Endothelial cell of umbilical vein (primary cell): ENCODE measurements at regions of chr11 and their contacts with region 1.

Region 1: GRCh38 chr11:2305140-2305840 is 3.5 kb downstream of the TSPAN32 start:
- DNase-seq: peak; percentile 56
- H3K4me3 ChIP-seq: no peak overlapping the region
- H3K27ac ChIP-seq: no peak overlapping the region
- H3K4me1 ChIP-seq: peaks cover 7% of the 10 kb centered on the region
- H3K27me3 ChIP-seq: no peaks in the 10 kb centered on the region
- CTCF ChIP-seq: peak; percentile 85 to 98
- POLR2A ChIP-seq: no peak

Region 2: DNA sequence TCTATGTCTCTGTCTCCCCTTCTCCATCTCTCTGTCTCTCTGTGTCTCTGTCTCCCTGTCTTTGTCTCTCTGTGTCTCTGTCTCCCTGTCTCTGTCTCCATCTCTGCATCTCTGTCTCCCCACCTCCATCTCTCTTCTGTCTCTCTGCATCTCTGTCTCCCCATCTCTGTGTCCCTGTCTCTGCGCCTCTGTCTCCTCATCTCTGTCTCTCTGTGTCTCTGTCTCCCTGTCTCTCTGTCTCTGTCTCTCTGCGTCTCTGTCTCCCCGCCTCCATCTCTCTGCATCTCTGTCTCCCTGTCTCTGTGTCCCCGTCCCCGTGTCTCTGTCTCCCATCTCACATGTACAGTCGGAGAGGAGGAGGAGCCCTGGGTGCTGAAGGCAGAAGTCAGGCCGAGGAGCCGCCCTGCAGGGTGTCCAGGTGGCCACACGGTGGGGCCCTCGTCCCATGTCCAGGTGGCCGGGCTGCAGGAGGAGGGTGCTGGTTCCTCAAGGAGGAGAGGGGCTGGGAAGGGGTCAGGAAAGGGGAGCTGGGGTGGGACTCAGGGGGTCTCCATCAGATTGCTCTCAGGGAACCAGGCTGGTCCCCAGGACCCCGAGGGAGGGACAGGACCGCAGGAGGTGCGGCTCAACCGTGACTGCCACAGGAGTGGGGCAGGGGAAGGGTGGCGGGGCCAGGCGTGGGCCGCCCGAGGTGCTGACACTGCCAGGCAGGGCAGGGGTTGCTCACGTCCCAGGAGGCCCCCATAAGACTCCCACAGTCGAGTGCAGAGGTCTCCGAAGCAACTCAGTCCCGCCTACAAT is 108.1 kb before region 1 on chr11:
- CTCF ChIA-PET with region 1: interaction called, 21 read pairs
- POLR2A ChIA-PET with region 1: no interaction called
- dilution Hi-C with region 1: no loop called
- intact Hi-C with region 1: loop called (anchors 2 kb)
- DNase-seq: peak; percentile 38
- H3K4me3 ChIP-seq: no peak overlapping the region
- H3K27ac ChIP-seq: no peak overlapping the region
- H3K4me1 ChIP-seq: no peaks in the 10 kb centered on the region
- H3K27me3 ChIP-seq: no peaks in the 10 kb centered on the region
- CTCF ChIP-seq: peak; percentile 63 to 81
- POLR2A ChIP-seq: no peak

Region 3: DNA sequence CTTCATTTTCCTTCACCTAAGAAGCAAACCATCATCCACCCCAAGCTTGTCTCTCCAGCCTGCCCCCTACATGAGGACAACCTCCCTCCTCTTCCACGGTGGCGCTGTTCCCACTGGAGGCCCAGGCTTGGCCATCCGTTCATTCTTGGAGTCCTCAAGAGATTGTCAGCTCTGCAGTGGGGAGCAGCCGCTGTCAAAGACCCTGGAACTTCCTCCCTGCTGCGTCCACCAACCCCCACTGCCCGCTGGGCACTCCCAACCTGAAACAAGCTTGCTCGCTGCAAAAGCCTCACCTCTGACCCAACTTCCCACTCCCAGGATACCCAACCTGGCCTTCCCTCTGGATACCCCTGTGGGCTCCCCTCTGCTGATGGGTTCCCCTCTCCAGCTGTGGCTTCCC is 61.4 kb after region 1 on chr11:
- CTCF ChIA-PET with region 1: interaction called, 11 read pairs
- POLR2A ChIA-PET with region 1: no interaction called
- dilution Hi-C with region 1: no loop called
- intact Hi-C with region 1: no loop called
- DNase-seq: no peak
- H3K4me3 ChIP-seq: no peak overlapping the region
- H3K27ac ChIP-seq: no peak overlapping the region
- H3K4me1 ChIP-seq: no peaks in the 10 kb centered on the region
- H3K27me3 ChIP-seq: no peaks in the 10 kb centered on the region
- CTCF ChIP-seq: no peak
- POLR2A ChIP-seq: no peak

Region 4: GRCh38 chr11:2377511-2378443 is 72.5 kb after region 1 on chr11:
- CTCF ChIA-PET with region 1: interaction called, 16 read pairs
- POLR2A ChIA-PET with region 1: interaction called, 9 read pairs
- dilution Hi-C with region 1: no loop called
- intact Hi-C with region 1: no loop called
- DNase-seq: peak; percentile 58
- H3K4me3 ChIP-seq: peak overlapping the region; percentile 72 to 80 (median 75)
- H3K27ac ChIP-seq: peak overlapping the region; percentile 91
- H3K4me1 ChIP-seq: peaks cover 37% of the 10 kb centered on the region
- H3K27me3 ChIP-seq: no peaks in the 10 kb centered on the region
- CTCF ChIP-seq: no peak
- POLR2A ChIP-seq: no peak

Region 5: GRCh38 chr11:2400069-2400760 is 94.9 kb after region 1 on chr11 and contains the start of gene TSSC4:
- CTCF ChIA-PET with region 1: interaction called, 42 read pairs
- POLR2A ChIA-PET with region 1: no interaction called
- dilution Hi-C with region 1: no loop called
- intact Hi-C with region 1: loop called (anchors 1 kb)
- DNase-seq: peak; percentile 100
- H3K4me3 ChIP-seq: peak within 1 kb of the TSS; percentile 56 to 86 (median 81)
- H3K27ac ChIP-seq: peak within 1 kb of the TSS; percentile 99
- H3K4me1 ChIP-seq: peaks cover 18% of the 10 kb centered on the region
- H3K27me3 ChIP-seq: no peaks in the 10 kb centered on the region
- CTCF ChIP-seq: peak; percentile 99
- POLR2A ChIP-seq: peak; percentile 96
- total RNA-seq, gene TSSC4: 59.6 and 61.9 TPM in 2 replicates

Region 6: DNA sequence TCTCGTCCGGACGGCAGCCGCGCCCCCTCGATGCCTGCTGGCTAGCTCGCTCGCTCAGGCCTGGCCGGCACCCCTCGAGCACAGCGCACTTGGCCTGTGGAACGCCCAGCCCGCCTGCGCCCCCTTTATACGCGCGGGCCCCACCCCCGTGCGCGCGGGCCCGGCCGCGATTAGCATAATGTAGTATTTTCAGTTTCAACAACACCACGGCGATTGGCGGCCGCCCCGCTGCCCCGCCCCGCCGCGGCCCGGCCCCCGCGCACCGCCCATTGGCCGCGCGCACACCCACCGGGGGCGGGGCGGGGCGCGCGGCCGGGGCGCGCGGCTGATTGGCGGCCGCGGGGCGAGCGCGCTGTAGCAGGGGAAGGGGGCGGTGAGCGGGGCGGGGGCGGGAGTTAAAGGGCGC is 580.4 kb after region 1 on chr11 and contains the start of gene CDKN1C:
- CTCF ChIA-PET with region 1: no interaction called
- POLR2A ChIA-PET with region 1: no interaction called
- dilution Hi-C with region 1: no loop called
- intact Hi-C with region 1: loop called (anchors 10 kb)
- DNase-seq: peak; percentile 88
- H3K4me3 ChIP-seq: peak within 1 kb of the TSS in 2 of 3 experiments; percentile 12 to 44
- H3K27ac ChIP-seq: no peak within 1 kb of the TSS
- H3K4me1 ChIP-seq: peaks cover 8% of the 10 kb centered on the region
- H3K27me3 ChIP-seq: peaks cover 3 to 14% of the 10 kb centered on the region in 2 experiments
- CTCF ChIP-seq: no peak
- POLR2A ChIP-seq: no peak
- total RNA-seq, gene CDKN1C: 5.2 and 9.0 TPM in 2 replicates